ENCODE measurements at regions of chr3 and their contacts with region 1.

Region 1: GRCh38 chr3:58491506-58492402 is at the start of gene KCTD6:
- DNase-seq: peak; percentile 61
- H3K4me3 ChIP-seq: peak within 1 kb of the TSS; percentile 78 to 96 (median 86)
- H3K27ac ChIP-seq: peak within 1 kb of the TSS; percentile 84 to 94 (median 90)
- H3K4me1 ChIP-seq: peaks cover 35 to 72% (median 46%) of the 10 kb centered on the region in 3 donors
- H3K27me3 ChIP-seq: no peaks in the 10 kb centered on the region
- CTCF ChIP-seq: peak; percentile 60 to 91 (median 84)
- POLR2A ChIP-seq: peak in 1 of 4 donors; percentile 41
- total RNA-seq, gene KCTD6: 8.3 to 24.6 (median 16.2) TPM

Region 2: DNA sequence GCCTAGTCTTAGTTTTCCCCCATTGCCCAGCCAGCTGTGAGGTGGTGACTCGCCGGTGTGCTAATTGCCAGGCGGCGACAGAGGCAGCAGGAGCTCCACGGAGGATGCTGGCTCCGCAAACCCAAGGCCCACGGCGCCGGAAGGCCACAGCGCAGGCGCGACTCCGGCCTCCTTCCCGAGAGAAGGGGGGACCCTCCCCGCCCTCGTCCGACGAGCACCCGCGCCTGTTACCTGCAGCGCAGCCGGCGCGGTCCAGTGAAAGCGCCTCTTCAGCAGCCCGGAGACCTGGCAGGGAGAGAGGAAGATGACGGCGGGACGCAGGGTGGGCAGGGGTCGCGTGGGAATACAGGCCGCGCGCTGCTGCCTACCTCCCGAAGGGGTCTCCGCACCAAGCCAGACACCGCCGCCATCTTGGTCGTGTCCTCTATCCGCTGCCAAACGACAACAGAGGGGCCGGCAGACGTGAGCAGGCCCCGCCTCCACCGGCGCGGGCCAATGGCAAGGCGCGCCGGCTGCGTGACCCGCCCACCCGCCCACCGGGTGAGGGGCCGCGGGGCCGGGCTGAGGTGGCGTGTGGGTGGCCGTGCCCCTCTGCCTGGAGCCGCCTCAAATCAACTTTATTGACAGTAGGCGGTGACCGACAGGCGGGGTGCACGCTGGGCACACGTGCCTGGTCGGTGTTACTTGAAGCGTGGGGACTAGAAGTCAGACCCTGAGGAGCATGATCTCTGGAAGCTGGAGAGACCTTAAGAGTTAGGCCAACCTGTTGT is 58.2 kb before region 1 on chr3 and contains the start of gene PDHB:
- intact Hi-C with region 1: no loop called
- DNase-seq: peak; percentile 48
- H3K4me3 ChIP-seq: peak within 1 kb of the TSS; percentile 57 to 90 (median 76)
- H3K27ac ChIP-seq: peak within 1 kb of the TSS; percentile 84 to 95 (median 91)
- H3K4me1 ChIP-seq: peaks cover 19 to 37% (median 20%) of the 10 kb centered on the region in 3 donors
- H3K27me3 ChIP-seq: no peaks in the 10 kb centered on the region
- CTCF ChIP-seq: peak in 1 of 6 experiments; percentile 16
- POLR2A ChIP-seq: peak in 3 of 4 donors; percentile 38 to 81 (median 72)
- total RNA-seq, gene PDHB: 52.6 to 104 (median 83.0) TPM

Region 3: GRCh38 chr3:58532794-58533220 is 41.1 kb after region 1 on chr3:
- intact Hi-C with region 1: loop called (anchors 5 kb)
- DNase-seq: no peak
- H3K4me3 ChIP-seq: no peak overlapping the region
- H3K27ac ChIP-seq: no peak overlapping the region
- H3K4me1 ChIP-seq: peaks cover 27 to 65% (median 40%) of the 10 kb centered on the region in 3 donors
- H3K27me3 ChIP-seq: no peaks in the 10 kb centered on the region
- CTCF ChIP-seq: peak; percentile 83 to 97 (median 94)
- POLR2A ChIP-seq: no peak